CD8-positive, alpha-beta T cell (primary cell): ENCODE measurements at regions of chr1 and their contacts with region 1.

Region 1: DNA sequence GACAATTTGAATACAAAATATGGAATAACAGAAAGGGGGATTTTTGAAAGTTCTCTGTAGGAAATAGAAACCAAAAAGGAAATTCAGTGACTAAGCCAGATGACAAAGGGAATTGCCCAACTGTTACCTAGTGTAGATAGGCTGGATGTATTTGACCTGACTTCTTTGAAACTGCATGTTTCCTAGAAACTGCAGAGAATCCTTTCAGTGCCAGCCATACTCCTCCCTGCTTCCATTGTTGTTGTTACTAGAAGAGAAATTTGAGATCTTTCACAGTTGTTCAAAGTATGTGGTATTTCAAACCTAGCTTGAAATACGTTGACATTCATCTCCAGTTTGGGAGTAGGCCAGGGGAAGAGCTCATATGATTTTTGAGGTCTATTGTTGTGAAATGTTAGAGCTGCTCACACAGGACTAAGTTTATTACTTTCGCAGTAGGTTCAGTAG is 1.8 kb upstream of the GBP5 start:
- DNase-seq: peak in 2 of 9 experiments; percentile 68 to 81
- ATAC-seq: peak; percentile 39
- H3K4me3 ChIP-seq: peak overlapping the region in 1 of 2 experiments; percentile 0
- H3K4me3 Mint-ChIP-seq: peak overlapping the region; percentile 85
- H3K27ac ChIP-seq: peak overlapping the region; percentile 24 to 70
- H3K27ac Mint-ChIP-seq: peak overlapping the region; percentile 97
- H3K4me1 ChIP-seq: peaks cover 62% of the 10 kb centered on the region
- H3K4me1 Mint-ChIP-seq: peaks cover 85% of the 10 kb centered on the region
- H3K27me3 ChIP-seq: no peaks in the 10 kb centered on the region
- H3K27me3 Mint-ChIP-seq: no peaks in the 10 kb centered on the region
- CTCF ChIP-seq: no peak

Region 2: GRCh38 chr1:89050338-89051033 is 223.9 kb before region 1 on chr1:
- CTCF ChIA-PET with region 1: no interaction called
- POLR2A ChIA-PET with region 1: no interaction called
- intact Hi-C with region 1: no loop called
- DNase-seq: no peak
- ATAC-seq: no peak
- H3K4me3 ChIP-seq: no peak overlapping the region
- H3K4me3 Mint-ChIP-seq: no peak overlapping the region
- H3K27ac ChIP-seq: no peak overlapping the region
- H3K27ac Mint-ChIP-seq: peak overlapping the region; percentile 70
- H3K4me1 ChIP-seq: no peaks in the 10 kb centered on the region
- H3K4me1 Mint-ChIP-seq: no peaks in the 10 kb centered on the region
- H3K27me3 ChIP-seq: no peaks in the 10 kb centered on the region
- H3K27me3 Mint-ChIP-seq: no peaks in the 10 kb centered on the region
- CTCF ChIP-seq: no peak

Region 3: GRCh38 chr1:89125913-89126580 is 148.4 kb before region 1 on chr1 and contains the start of gene GBP2:
- CTCF ChIA-PET with region 1: interaction called, 14 read pairs
- POLR2A ChIA-PET with region 1: interaction called, 5 read pairs
- intact Hi-C with region 1: no loop called
- DNase-seq: peak in 5 of 9 experiments; percentile 24 to 77 (median 44)
- ATAC-seq: peak; percentile 74
- H3K4me3 ChIP-seq: peak within 1 kb of the TSS; percentile 59 to 75
- H3K4me3 Mint-ChIP-seq: peak within 1 kb of the TSS; percentile 97
- H3K27ac ChIP-seq: peak within 1 kb of the TSS; percentile 59 to 78
- H3K27ac Mint-ChIP-seq: peak within 1 kb of the TSS; percentile 99
- H3K4me1 ChIP-seq: peaks cover 39% of the 10 kb centered on the region
- H3K4me1 Mint-ChIP-seq: peaks cover 66% of the 10 kb centered on the region
- H3K27me3 ChIP-seq: no peaks in the 10 kb centered on the region
- H3K27me3 Mint-ChIP-seq: no peaks in the 10 kb centered on the region
- CTCF ChIP-seq: no peak
- total RNA-seq, gene GBP2: 120 to 125 TPM

Region 4: GRCh38 chr1:89221341-89221740 is 53.1 kb before region 1 on chr1:
- CTCF ChIA-PET with region 1: no interaction called
- POLR2A ChIA-PET with region 1: no interaction called
- intact Hi-C with region 1: no loop called
- DNase-seq: no peak
- ATAC-seq: no peak
- H3K4me3 ChIP-seq: no peak overlapping the region
- H3K4me3 Mint-ChIP-seq: no peak overlapping the region
- H3K27ac ChIP-seq: no peak overlapping the region
- H3K27ac Mint-ChIP-seq: no peak overlapping the region
- H3K4me1 ChIP-seq: no peaks in the 10 kb centered on the region
- H3K4me1 Mint-ChIP-seq: no peaks in the 10 kb centered on the region
- H3K27me3 ChIP-seq: no peaks in the 10 kb centered on the region
- H3K27me3 Mint-ChIP-seq: no peaks in the 10 kb centered on the region
- CTCF ChIP-seq: no peak

Region 5: GRCh38 chr1:89261926-89262515 is 12.4 kb before region 1 on chr1:
- CTCF ChIA-PET with region 1: interaction called, 5 read pairs
- POLR2A ChIA-PET with region 1: interaction called, 12 read pairs
- intact Hi-C with region 1: loop called in 1 of 2 experiments (anchors 1 kb)
- DNase-seq: no peak
- ATAC-seq: no peak
- H3K4me3 ChIP-seq: no peak overlapping the region
- H3K4me3 Mint-ChIP-seq: peak overlapping the region; percentile 32
- H3K27ac ChIP-seq: peak overlapping the region in 1 of 2 experiments; percentile 55
- H3K27ac Mint-ChIP-seq: peak overlapping the region; percentile 78
- H3K4me1 ChIP-seq: peaks cover 58% of the 10 kb centered on the region
- H3K4me1 Mint-ChIP-seq: peaks cover 82% of the 10 kb centered on the region
- H3K27me3 ChIP-seq: no peaks in the 10 kb centered on the region
- H3K27me3 Mint-ChIP-seq: no peaks in the 10 kb centered on the region
- CTCF ChIP-seq: no peak

Region 6: DNA sequence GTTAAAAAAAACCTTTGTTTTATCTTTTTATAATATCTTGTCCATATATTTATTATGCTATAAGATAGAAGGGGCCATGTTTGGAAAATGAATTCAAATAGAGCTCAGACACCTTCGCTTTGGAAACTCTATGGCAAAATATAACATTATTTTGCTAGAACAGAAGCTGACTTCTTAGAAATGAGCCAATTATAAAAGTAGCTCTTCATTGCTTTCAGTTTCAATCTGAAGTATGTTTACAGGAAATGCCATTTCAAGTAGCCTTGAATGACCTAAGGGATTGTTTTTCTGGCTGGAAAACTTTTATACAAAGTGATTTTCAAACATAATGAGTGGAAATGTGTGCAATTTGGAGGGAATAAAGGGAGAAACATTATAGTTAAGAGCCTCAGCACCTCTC is 36.1 kb after region 1 on chr1:
- CTCF ChIA-PET with region 1: interaction called, 3 read pairs
- POLR2A ChIA-PET with region 1: interaction called, 3 read pairs
- intact Hi-C with region 1: loop called in 1 of 2 experiments (anchors 2 kb)
- DNase-seq: peak in 2 of 9 experiments; percentile 27 to 57
- ATAC-seq: peak; percentile 54
- H3K4me3 ChIP-seq: no peak overlapping the region
- H3K4me3 Mint-ChIP-seq: peak overlapping the region; percentile 47
- H3K27ac ChIP-seq: peak overlapping the region; percentile 22 to 64
- H3K27ac Mint-ChIP-seq: peak overlapping the region; percentile 90
- H3K4me1 ChIP-seq: peaks cover 39% of the 10 kb centered on the region
- H3K4me1 Mint-ChIP-seq: peaks cover 54% of the 10 kb centered on the region
- H3K27me3 ChIP-seq: no peaks in the 10 kb centered on the region
- H3K27me3 Mint-ChIP-seq: no peaks in the 10 kb centered on the region
- CTCF ChIP-seq: no peak